Activated B cell treated with CpG ODN at 0.5 μM for 24 hours (primary cell): ENCODE measurements at regions of chr2 and their contacts with region 1.

Region 1: GRCh38 chr2:128321784-128322714 is 3.4 kb upstream of the HS6ST1 start:
- DNase-seq: peak; percentile 87
- ATAC-seq: peak; percentile 56
- H3K4me3 Mint-ChIP-seq: peak overlapping the region; percentile 78
- H3K27ac Mint-ChIP-seq: peak overlapping the region; percentile 12
- H3K4me1 Mint-ChIP-seq: peaks cover 12% of the 10 kb centered on the region
- H3K27me3 Mint-ChIP-seq: no peaks in the 10 kb centered on the region
- CTCF ChIP-seq: no peak

Region 2: GRCh38 chr2:128027801-128028667 is 294.0 kb before region 1 on chr2 and contains the start of gene SAP130:
- CTCF ChIA-PET with region 1: no interaction called
- POLR2A ChIA-PET with region 1: no interaction called
- intact Hi-C with region 1: loop called (anchors 2 kb)
- DNase-seq: peak; percentile 98
- ATAC-seq: peak; percentile 78
- H3K4me3 Mint-ChIP-seq: peak within 1 kb of the TSS; percentile 92
- H3K27ac Mint-ChIP-seq: peak within 1 kb of the TSS; percentile 84
- H3K4me1 Mint-ChIP-seq: peaks cover 18% of the 10 kb centered on the region
- H3K27me3 Mint-ChIP-seq: peaks cover 4% of the 10 kb centered on the region
- CTCF ChIP-seq: no peak
- total RNA-seq, gene SAP130: 24.7 and 27.1 TPM in 2 replicates

Region 3: GRCh38 chr2:128232965-128233789 is 88.9 kb before region 1 on chr2:
- CTCF ChIA-PET with region 1: no interaction called
- POLR2A ChIA-PET with region 1: no interaction called
- intact Hi-C with region 1: loop called (anchors 5 kb)
- DNase-seq: peak; percentile 77
- ATAC-seq: peak; percentile 98
- H3K4me3 Mint-ChIP-seq: peak overlapping the region; percentile 82
- H3K27ac Mint-ChIP-seq: no peak overlapping the region
- H3K4me1 Mint-ChIP-seq: peaks cover 5% of the 10 kb centered on the region
- H3K27me3 Mint-ChIP-seq: peaks cover 8% of the 10 kb centered on the region
- CTCF ChIP-seq: peak; percentile 72

Region 4: GRCh38 chr2:128395640-128396499 is 73.8 kb after region 1 on chr2:
- CTCF ChIA-PET with region 1: no interaction called
- POLR2A ChIA-PET with region 1: no interaction called
- intact Hi-C with region 1: no loop called
- DNase-seq: no peak
- ATAC-seq: no peak
- H3K4me3 Mint-ChIP-seq: no peak overlapping the region
- H3K27ac Mint-ChIP-seq: no peak overlapping the region
- H3K4me1 Mint-ChIP-seq: no peaks in the 10 kb centered on the region
- H3K27me3 Mint-ChIP-seq: no peaks in the 10 kb centered on the region
- CTCF ChIP-seq: no peak

Region 5: GRCh38 chr2:128442053-128442751 is 120.2 kb after region 1 on chr2:
- CTCF ChIA-PET with region 1: no interaction called
- POLR2A ChIA-PET with region 1: no interaction called
- intact Hi-C with region 1: no loop called
- DNase-seq: no peak
- ATAC-seq: no peak
- H3K4me3 Mint-ChIP-seq: no peak overlapping the region
- H3K27ac Mint-ChIP-seq: no peak overlapping the region
- H3K4me1 Mint-ChIP-seq: no peaks in the 10 kb centered on the region
- H3K27me3 Mint-ChIP-seq: peaks cover 9% of the 10 kb centered on the region
- CTCF ChIP-seq: no peak

Region 6: GRCh38 chr2:128531856-128532255 is 209.8 kb after region 1 on chr2:
- CTCF ChIA-PET with region 1: no interaction called
- POLR2A ChIA-PET with region 1: no interaction called
- intact Hi-C with region 1: loop called (anchors 1 kb)
- DNase-seq: no peak
- ATAC-seq: no peak
- H3K4me3 Mint-ChIP-seq: no peak overlapping the region
- H3K27ac Mint-ChIP-seq: no peak overlapping the region
- H3K4me1 Mint-ChIP-seq: peaks cover 3% of the 10 kb centered on the region
- H3K27me3 Mint-ChIP-seq: peaks cover 9% of the 10 kb centered on the region
- CTCF ChIP-seq: no peak

Region 7: GRCh38 chr2:129849559-129850160 is 1527.6 kb after region 1 on chr2:
- CTCF ChIA-PET with region 1: interaction called, 3 read pairs
- POLR2A ChIA-PET with region 1: no interaction called
- intact Hi-C with region 1: loop called (anchors 1 kb)
- DNase-seq: no peak
- ATAC-seq: peak; percentile 82
- H3K4me3 Mint-ChIP-seq: no peak overlapping the region
- H3K27ac Mint-ChIP-seq: no peak overlapping the region
- H3K4me1 Mint-ChIP-seq: peaks cover 1% of the 10 kb centered on the region
- H3K27me3 Mint-ChIP-seq: peaks cover 17% of the 10 kb centered on the region
- CTCF ChIP-seq: no peak

Region 8: GRCh38 chr2:130181325-130181879 is 1859.4 kb after region 1 on chr2 and contains the start of gene SMPD4:
- CTCF ChIA-PET with region 1: no interaction called
- POLR2A ChIA-PET with region 1: interaction called, 3 read pairs
- intact Hi-C with region 1: loop called (anchors 5 kb)
- DNase-seq: peak; percentile 97
- ATAC-seq: peak; percentile 75
- H3K4me3 Mint-ChIP-seq: peak within 1 kb of the TSS; percentile 93
- H3K27ac Mint-ChIP-seq: peak within 1 kb of the TSS; percentile 91
- H3K4me1 Mint-ChIP-seq: peaks cover 31% of the 10 kb centered on the region
- H3K27me3 Mint-ChIP-seq: no peaks in the 10 kb centered on the region
- CTCF ChIP-seq: no peak
- total RNA-seq, gene SMPD4: 58.5 and 66.8 TPM in 2 replicates